Psoas muscle (tissue), 8 donors: ENCODE measurements at regions of chr16 and their contacts with region 1.

Region 1: GRCh38 chr16:67284699-67285646 is 5.6 kb downstream of the PLEKHG4 start:
- DNase-seq: peak; percentile 42 to 80
- ATAC-seq: peak; percentile 88 to 94 (median 92)
- H3K4me3 ChIP-seq: no peak overlapping the region
- H3K27ac ChIP-seq: no peak overlapping the region
- H3K4me1 ChIP-seq: no peaks in the 10 kb centered on the region
- H3K27me3 ChIP-seq: no peaks in the 10 kb centered on the region
- CTCF ChIP-seq: peak; percentile 67

Region 2: DNA sequence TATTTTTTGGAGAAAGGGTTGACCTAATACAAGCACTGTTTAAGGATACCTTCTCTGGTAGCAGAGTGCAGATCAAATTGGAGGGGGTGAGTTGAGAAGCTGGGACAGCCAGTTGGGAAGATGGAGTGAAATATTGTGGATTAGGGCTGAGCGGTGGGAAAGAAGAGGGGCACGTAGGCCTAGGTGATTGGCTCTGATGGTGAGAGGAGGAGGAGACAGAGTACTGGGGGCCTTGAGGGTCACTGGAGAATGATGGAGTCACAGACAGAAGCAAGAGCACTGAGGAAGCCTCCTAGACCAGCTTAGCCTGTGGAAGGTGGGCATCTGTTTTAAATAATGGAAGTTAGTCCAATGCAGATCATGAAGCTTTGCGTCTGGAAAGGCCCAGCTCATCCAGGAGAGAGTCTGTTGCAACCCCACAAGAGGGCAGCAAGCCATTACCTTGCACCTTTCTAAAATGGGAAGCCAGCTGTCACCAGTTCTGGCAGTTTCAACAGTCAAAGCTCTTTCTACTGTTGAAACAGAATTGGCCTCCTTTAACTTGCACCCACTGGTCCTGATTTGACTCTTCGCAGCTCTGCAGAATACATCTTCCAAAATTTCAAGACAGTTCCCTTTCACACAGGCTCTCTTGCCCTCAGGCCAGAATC is 24.4 kb before region 1 on chr16:
- intact Hi-C with region 1: loop called (anchors 1 to 2 kb)
- DNase-seq: peak; percentile 53 to 75
- ATAC-seq: peak; percentile 91 to 98 (median 94)
- H3K4me3 ChIP-seq: no peak overlapping the region
- H3K27ac ChIP-seq: peak overlapping the region; percentile 66
- H3K4me1 ChIP-seq: peaks cover 10% of the 10 kb centered on the region
- H3K27me3 ChIP-seq: no peaks in the 10 kb centered on the region
- CTCF ChIP-seq: peak; percentile 68